GM10248 (cell line): ENCODE measurements at regions of chr19 and their contacts with region 1.

Region 1: GRCh38 chr19:48608798-48609263 is 2.3 kb downstream of the SPACA4 start:
- DNase-seq: peak; percentile 80
- CTCF ChIP-seq: peak; percentile 65

Region 2: DNA sequence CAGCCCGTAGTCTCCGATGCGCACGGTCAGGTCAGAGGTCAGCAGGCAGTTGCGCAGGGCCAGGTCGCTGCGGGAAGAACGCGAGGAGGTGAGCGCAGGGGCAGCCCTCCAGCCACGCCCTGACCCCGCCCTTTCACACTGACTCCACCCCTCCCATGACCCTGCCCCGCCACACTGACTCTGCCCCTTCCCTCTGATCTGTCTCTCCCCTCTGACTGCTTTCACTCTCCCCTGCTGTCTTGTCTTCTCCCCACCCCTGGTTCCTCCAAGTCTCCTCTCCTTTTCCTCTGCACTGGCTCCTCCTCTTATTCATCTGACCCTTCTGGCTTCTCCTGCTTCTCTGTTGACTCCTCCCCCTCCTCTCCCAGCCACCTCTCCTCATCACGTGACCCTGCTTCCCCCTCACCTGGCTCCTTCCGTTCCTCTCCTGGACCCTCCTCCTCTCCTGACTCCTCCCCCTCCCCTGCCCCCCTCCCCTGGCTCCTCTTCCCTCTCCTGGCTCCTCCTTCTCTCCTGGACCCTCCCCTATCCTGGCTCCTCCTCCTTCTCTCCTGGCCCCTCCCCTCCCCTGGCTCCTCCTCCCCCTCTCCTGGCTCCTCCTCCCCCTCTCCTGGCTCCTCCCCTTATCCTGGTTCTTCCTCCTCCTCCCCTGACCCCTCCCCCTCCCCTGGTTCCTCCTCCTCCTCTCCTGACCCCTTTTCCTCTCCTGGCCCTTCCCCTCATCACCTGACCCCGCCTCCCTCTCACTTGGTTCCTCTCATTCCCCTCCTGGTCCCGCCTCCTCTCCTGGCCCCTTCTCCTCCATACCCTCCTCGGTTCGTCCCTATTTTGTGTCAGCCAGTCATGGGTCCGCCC is 107.1 kb before region 1 on chr19:
- CTCF ChIA-PET with region 1: interaction called, 23 read pairs
- POLR2A ChIA-PET with region 1: no interaction called
- DNase-seq: peak; percentile 82
- CTCF ChIP-seq: no peak

Region 3: GRCh38 chr19:48618916-48619691 is 10.3 kb after region 1 on chr19 and contains the starts of genes RPL18 and SPHK2:
- CTCF ChIA-PET with region 1: interaction called, 21 read pairs
- POLR2A ChIA-PET with region 1: interaction called, 38 read pairs
- DNase-seq: peak; percentile 98
- CTCF ChIP-seq: peak; percentile 6

Region 4: GRCh38 chr19:48656840-48657474 is 48.1 kb after region 1 on chr19:
- CTCF ChIA-PET with region 1: no interaction called
- POLR2A ChIA-PET with region 1: no interaction called
- DNase-seq: no peak
- CTCF ChIP-seq: no peak

Region 5: DNA sequence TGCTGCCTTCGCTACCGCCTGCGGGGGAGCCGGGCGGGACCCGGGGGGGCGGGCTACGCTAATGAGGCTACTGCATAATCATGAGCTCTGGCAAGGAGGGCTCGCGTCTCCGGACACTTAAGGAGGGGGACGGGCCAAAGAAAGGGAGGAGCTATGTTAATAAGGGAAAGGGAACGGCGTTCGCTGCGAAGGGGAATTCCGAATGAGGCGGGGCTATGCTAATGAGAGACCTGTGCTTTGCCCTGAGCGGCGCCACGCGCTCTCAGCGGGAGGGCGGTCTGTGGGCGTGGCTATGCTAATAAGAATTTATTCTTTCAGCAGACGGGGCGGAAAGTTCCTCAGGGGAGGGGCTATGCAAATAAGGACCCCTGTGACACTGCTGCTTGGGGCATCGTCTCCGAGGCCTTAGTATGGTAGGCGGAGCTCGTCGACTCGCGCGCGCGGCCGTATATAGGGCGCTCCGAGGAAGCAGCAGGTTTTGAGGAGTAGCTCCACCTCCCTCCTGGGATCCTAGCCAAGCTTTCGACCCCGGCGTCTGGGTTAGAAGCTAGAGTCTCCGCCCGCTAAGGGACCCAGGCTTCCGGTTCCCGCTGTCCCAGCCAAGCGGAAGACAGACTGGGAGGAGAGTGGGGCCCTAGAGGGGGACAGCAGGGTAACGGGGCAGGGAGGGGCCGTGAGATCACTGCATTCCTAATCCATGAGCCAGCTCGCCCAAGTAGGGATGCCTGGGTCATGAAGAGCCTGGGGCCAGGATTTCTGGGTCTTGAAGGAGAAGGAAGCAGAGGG is 1031.5 kb after region 1 on chr19 and contains the start of gene RRAS:
- CTCF ChIA-PET with region 1: no interaction called
- POLR2A ChIA-PET with region 1: interaction called, 10 read pairs
- DNase-seq: peak; percentile 98
- CTCF ChIP-seq: no peak